ENCODE measurements at regions of chr12 and their contacts with region 1.

Region 1: GRCh38 chr12:24206621-24207020 is 257.2 kb upstream of the SOX5 start:
- DNase-seq: no peak
- H3K4me3 ChIP-seq: no peak overlapping the region
- H3K27ac ChIP-seq: no peak overlapping the region
- H3K4me1 ChIP-seq: no peaks in the 10 kb centered on the region
- H3K27me3 ChIP-seq: no peaks in the 10 kb centered on the region
- CTCF ChIP-seq: no peak
- POLR2A ChIP-seq: no peak

Region 2: GRCh38 chr12:24705741-24706358 is 499.2 kb after region 1 on chr12:
- intact Hi-C with region 1: loop called (anchors 5 kb)
- DNase-seq: no peak
- H3K4me3 ChIP-seq: no peak overlapping the region
- H3K27ac ChIP-seq: no peak overlapping the region
- H3K4me1 ChIP-seq: no peaks in the 10 kb centered on the region
- H3K27me3 ChIP-seq: no peaks in the 10 kb centered on the region
- CTCF ChIP-seq: no peak
- POLR2A ChIP-seq: no peak